Heart left ventricle (tissue), 16 donors: ENCODE measurements at regions of chr20 and their contacts with region 1.

Region 1: DNA sequence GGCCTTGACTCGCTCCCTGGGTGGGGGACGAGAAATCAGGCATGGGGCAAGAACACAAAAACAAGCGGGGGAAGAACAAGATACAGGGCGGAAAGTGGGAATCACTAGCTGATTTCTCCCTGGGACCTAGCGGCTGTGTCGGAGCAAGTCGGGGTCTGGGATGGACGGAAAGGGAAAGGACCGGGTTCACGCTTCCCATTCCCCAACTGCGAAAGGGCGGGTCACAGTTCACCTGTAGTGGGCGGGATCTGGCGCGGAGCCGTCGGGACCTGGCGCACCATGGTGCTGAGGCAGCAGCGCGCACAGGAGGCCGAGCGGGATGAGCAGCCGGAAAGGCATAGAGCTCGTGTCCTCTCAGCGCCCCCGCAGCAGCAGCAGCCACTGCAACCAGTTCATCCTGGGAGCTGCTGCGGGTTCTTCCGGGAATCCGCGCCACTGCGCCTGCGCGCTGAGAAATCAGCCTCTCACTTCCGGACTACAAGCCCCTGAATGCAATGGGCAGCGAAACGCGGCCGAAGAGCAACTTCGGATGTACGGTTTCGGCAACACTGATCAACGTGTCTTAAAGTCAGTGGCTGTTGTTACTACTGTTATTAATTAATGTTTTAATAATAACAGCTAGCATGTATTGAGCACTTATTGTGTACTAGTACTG is at the start of gene EDEM2:
- DNase-seq: peak; percentile 93 to 98 (median 95)
- ATAC-seq: peak; percentile 87 to 97 (median 96)
- H3K4me3 ChIP-seq: peak within 1 kb of the TSS; percentile 60 to 91 (median 75)
- H3K27ac ChIP-seq: peak within 1 kb of the TSS; percentile 18 to 88 (median 76)
- H3K4me1 ChIP-seq: peaks cover 0 to 45% (median 16%) of the 10 kb centered on the region in 12 donors
- H3K27me3 ChIP-seq: no peaks in the 10 kb centered on the region
- CTCF ChIP-seq: no peak
- POLR2A ChIP-seq: peak in 1 of 2 donors; percentile 73
- total RNA-seq, gene EDEM2: 9.5 to 30.3 (median 14.4) TPM

Region 2: DNA sequence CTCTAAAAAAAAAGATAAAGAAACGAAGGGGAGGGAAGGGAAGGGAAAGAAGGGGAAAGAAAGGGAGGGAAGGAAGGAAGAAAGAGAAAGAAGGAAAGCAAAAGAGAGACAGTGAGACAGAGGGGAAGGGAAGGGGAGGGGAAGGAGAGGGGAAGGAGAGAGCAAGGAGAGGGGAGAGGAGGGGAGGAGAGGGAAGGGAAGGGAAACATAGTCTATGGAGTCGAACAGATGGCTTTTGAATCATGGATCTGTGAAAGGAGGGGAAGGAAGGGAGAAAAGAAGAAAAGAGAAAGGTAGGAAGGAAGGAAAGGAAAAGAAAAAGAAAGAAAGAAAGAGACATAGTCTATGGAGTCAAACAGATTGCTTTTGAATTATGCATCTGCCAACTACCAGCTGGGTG is 304.9 kb before region 1 on chr20:
- intact Hi-C with region 1: no loop called
- DNase-seq: no peak
- ATAC-seq: no peak
- H3K4me3 ChIP-seq: no peak overlapping the region
- H3K27ac ChIP-seq: no peak overlapping the region
- H3K4me1 ChIP-seq: no peaks in the 10 kb centered on the region
- H3K27me3 ChIP-seq: no peaks in the 10 kb centered on the region
- CTCF ChIP-seq: no peak
- POLR2A ChIP-seq: no peak

Region 3: GRCh38 chr20:35092524-35093266 is 54.4 kb before region 1 on chr20 and contains the start of gene TRPC4AP:
- intact Hi-C with region 1: loop called in 4 of 10 experiments (anchors 2 to 5 kb)
- DNase-seq: peak; percentile 89 to 96 (median 91)
- ATAC-seq: peak; percentile 85 to 97 (median 94)
- H3K4me3 ChIP-seq: peak within 1 kb of the TSS; percentile 68 to 97 (median 84)
- H3K27ac ChIP-seq: peak within 1 kb of the TSS; percentile 76 to 97 (median 92)
- H3K4me1 ChIP-seq: peaks cover 4 to 47% (median 35%) of the 10 kb centered on the region in 12 donors
- H3K27me3 ChIP-seq: no peaks in the 10 kb centered on the region
- CTCF ChIP-seq: peak in 11 of 12 donors; percentile 94 to 99 (median 97)
- POLR2A ChIP-seq: peak in 1 of 2 donors; percentile 63
- total RNA-seq, gene TRPC4AP: 31.5 to 51.8 (median 38.6) TPM

Region 4: DNA sequence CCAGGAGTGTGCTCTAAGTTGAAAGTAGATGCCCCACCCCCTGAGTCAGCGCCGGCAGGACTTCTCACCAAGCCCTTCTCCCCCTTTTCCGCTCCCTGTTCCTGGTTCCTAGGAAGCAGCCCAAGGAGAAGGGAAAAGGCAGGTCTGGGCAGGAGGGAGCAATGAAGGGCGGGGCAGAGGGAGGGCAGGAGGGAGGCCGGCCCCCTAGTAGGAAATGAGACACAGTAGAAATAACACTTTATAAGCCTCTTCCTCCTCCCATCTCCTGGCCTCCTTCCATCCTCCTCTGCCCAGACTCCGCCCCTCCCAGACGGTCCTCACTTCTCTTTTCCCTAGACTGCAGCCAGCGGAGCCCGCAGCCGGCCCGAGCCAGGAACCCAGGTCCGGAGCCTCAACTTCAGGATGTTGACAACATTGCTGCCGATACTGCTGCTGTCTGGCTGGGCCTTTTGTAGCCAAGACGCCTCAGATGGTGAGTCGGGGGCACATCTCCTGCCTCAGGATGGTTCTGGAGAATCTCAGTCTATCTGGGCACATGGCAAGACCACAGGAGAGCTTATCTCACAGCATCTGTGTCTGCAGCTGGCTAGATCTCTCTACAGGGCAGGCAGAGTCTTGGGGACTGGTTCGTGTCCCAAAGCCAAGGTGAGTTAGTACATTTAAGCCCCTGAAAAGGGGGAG is 24.8 kb after region 1 on chr20 and contains the start of gene PROCR:
- intact Hi-C with region 1: loop called in 1 of 10 experiments (anchors 1 kb)
- DNase-seq: peak; percentile 88 to 91 (median 89)
- ATAC-seq: peak; percentile 91 to 97 (median 96)
- H3K4me3 ChIP-seq: peak within 1 kb of the TSS in 11 of 12 donors; percentile 17 to 58 (median 50)
- H3K27ac ChIP-seq: peak within 1 kb of the TSS; percentile 23 to 83 (median 68)
- H3K4me1 ChIP-seq: peaks cover 0 to 31% (median 18%) of the 10 kb centered on the region in 12 donors
- H3K27me3 ChIP-seq: no peaks in the 10 kb centered on the region
- CTCF ChIP-seq: no peak
- POLR2A ChIP-seq: no peak
- total RNA-seq, gene PROCR: 2.5 to 64.6 (median 9.9) TPM

Region 5: DNA sequence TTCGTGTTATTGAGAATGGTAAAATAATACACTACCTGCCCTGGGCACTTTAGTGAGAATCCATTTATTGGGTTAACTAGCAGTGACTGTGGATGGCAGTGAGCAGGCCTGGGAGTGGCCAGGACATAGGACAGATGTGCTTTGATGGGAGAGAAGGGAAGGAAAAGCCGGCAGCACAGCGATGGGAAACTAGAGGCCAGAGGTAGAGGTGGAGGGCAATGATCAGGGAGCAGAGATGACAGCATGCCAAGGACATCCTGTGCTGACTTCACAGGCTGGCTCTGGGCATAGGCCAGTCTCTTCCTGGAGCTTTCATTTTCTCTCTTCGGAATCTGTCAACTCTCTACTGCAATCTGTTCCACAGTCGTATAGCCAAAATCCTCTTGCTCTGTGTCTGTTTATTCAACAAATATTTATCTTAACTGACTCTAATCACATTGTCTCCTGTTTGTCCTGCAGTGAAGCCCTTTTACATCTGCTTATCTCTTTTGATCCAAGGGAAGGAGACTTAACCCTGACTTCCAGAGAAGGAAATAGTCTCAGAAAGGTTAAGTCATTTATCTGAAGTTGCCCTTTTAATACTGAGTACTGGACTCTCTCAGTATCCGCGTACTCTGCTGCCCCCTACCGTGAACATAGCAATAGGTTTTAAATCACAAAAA is 61.0 kb after region 1 on chr20:
- intact Hi-C with region 1: loop called (anchors 1 to 5 kb)
- DNase-seq: peak; percentile 78 to 89 (median 83)
- ATAC-seq: peak; percentile 91 to 96 (median 94)
- H3K4me3 ChIP-seq: peak overlapping the region in 8 of 12 donors; percentile 2 to 35 (median 22)
- H3K27ac ChIP-seq: peak overlapping the region; percentile 19 to 80 (median 71)
- H3K4me1 ChIP-seq: peaks cover 0 to 13% (median 6%) of the 10 kb centered on the region in 12 donors
- H3K27me3 ChIP-seq: no peaks in the 10 kb centered on the region
- CTCF ChIP-seq: peak; percentile 75 to 88 (median 82)
- POLR2A ChIP-seq: no peak

Region 6: GRCh38 chr20:35269055-35269781 is 122.2 kb after region 1 on chr20:
- intact Hi-C with region 1: loop called in 6 of 10 experiments (anchors 1 to 10 kb)
- DNase-seq: peak in 4 of 5 donors; percentile 43 to 66 (median 58)
- ATAC-seq: peak; percentile 34 to 72 (median 70)
- H3K4me3 ChIP-seq: no peak overlapping the region
- H3K27ac ChIP-seq: no peak overlapping the region
- H3K4me1 ChIP-seq: peaks cover 0 to 14% (median 0%) of the 10 kb centered on the region in 12 donors
- H3K27me3 ChIP-seq: no peaks in the 10 kb centered on the region
- CTCF ChIP-seq: peak; percentile 54 to 82 (median 68)
- POLR2A ChIP-seq: no peak

Region 7: GRCh38 chr20:35277531-35278395 is 130.7 kb after region 1 on chr20 and contains the start of gene MMP24OS:
- intact Hi-C with region 1: loop called in 2 of 10 experiments (anchors 5 to 10 kb)
- DNase-seq: peak; percentile 91 to 96 (median 95)
- ATAC-seq: peak; percentile 87 to 96 (median 94)
- H3K4me3 ChIP-seq: peak within 1 kb of the TSS; percentile 56 to 100 (median 88)
- H3K27ac ChIP-seq: peak within 1 kb of the TSS; percentile 88 to 100 (median 98)
- H3K4me1 ChIP-seq: peaks cover 2 to 36% (median 13%) of the 10 kb centered on the region in 12 donors
- H3K27me3 ChIP-seq: no peaks in the 10 kb centered on the region
- CTCF ChIP-seq: peak in 6 of 12 donors; percentile 12 to 43 (median 23)
- POLR2A ChIP-seq: peak; percentile 88 to 96
- total RNA-seq, gene MMP24OS: 17.5 to 64.8 (median 41.6) TPM

Region 8: GRCh38 chr20:35432430-35432735 is 285.3 kb after region 1 on chr20:
- intact Hi-C with region 1: loop called in 1 of 10 experiments (anchors 10 kb)
- DNase-seq: no peak
- ATAC-seq: no peak
- H3K4me3 ChIP-seq: no peak overlapping the region
- H3K27ac ChIP-seq: no peak overlapping the region
- H3K4me1 ChIP-seq: no peaks in the 10 kb centered on the region
- H3K27me3 ChIP-seq: no peaks in the 10 kb centered on the region
- CTCF ChIP-seq: no peak
- POLR2A ChIP-seq: no peak